Naive thymus-derived CD4-positive, alpha-beta T cell (primary cell): ENCODE measurements at regions of chr1 and their contacts with region 1.

Region 1: DNA sequence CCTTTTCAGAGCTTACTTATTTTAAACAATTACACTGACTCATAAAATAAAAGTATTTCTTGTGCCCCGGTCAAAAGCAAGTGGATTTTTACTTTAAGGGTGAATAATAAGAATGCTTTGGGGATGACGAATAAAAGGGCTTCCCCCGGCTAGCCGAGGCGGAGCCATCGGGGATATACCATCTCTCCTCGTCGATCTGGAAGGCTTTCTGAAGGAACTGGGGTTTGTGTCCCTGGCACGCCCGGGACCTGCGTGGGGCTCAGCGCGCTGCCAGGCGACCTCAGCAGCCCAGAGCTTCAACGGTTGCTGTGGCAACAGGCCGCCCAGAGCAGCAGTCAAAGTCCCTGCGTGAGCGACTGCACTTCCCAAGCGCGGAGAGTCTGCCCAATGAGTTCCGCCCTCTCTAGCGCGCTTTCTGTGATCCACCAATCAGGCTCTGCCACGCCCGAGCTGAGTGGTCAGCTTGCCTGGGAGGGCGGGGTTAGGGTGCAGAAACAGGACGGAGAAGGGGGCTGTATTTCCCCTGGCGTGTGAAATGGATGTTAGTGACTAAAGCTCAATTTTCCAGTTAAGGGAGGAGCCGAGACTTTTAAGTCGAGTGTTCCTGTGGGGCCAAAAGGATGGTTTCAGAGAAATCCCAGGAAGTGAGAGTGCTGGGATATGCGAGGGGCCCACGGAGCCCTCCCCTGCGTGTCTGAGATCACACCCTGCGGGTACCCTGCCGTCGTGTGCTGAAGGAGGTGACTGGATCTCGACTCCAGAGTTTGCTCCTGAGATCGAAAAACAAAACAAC is 33.0 kb upstream of the MGST3 start:
- DNase-seq: peak; percentile 71 to 93 (median 79)
- ATAC-seq: peak; percentile 98
- H3K4me3 ChIP-seq: peak overlapping the region; percentile 70
- H3K4me3 Mint-ChIP-seq: peak overlapping the region; percentile 86 to 95 (median 92)
- H3K27ac ChIP-seq: peak overlapping the region; percentile 31
- H3K27ac Mint-ChIP-seq: peak overlapping the region in 8 of 9 donors; percentile 28 to 94 (median 85)
- H3K4me1 ChIP-seq: peaks cover 11 to 12% of the 10 kb centered on the region in 2 donors
- H3K4me1 Mint-ChIP-seq: peaks cover 21 to 28% (median 26%) of the 10 kb centered on the region in 7 donors
- H3K27me3 ChIP-seq: peaks cover 6 to 16% of the 10 kb centered on the region in 2 donors
- H3K27me3 Mint-ChIP-seq: peaks cover 24 to 55% (median 47%) of the 10 kb centered on the region in 5 donors

Region 2: DNA sequence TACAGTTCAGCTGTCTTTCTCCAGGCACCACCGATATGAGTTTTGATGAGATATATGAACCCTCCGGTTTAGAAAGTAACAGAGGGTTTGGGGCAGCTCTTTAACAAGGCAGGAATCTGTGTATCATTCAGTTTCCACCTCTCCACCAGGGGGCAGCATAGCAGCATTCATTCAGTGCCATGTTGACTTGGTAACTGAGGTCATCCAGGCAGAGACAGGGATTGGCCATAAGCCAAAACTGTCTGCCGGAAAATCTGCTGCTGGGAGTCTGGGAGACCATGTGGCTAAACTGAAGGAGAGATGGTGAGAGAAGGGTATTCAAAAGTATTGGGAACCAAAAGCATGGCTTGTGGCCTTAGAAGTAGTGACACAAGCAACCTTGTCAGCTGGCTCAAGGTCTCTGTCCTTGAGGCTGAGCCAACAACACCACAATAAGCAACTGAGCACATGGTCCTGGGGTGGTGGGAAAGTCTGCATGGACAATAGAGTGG is 340.1 kb before region 1 on chr1:
- CTCF ChIA-PET with region 1: no interaction called
- POLR2A ChIA-PET with region 1: no interaction called
- intact Hi-C with region 1: loop called in 1 of 2 experiments (anchors 1 kb)
- DNase-seq: peak in 2 of 9 donors; percentile 0 to 33
- ATAC-seq: no peak
- H3K4me3 ChIP-seq: no peak overlapping the region
- H3K4me3 Mint-ChIP-seq: no peak overlapping the region
- H3K27ac ChIP-seq: no peak overlapping the region
- H3K27ac Mint-ChIP-seq: no peak overlapping the region
- H3K4me1 ChIP-seq: no peaks in the 10 kb centered on the region
- H3K4me1 Mint-ChIP-seq: no peaks in the 10 kb centered on the region
- H3K27me3 ChIP-seq: no peaks in the 10 kb centered on the region
- H3K27me3 Mint-ChIP-seq: peaks cover 2 to 43% (median 28%) of the 10 kb centered on the region in 5 donors

Region 3: GRCh38 chr1:165403835-165404482 is 194.1 kb before region 1 on chr1:
- CTCF ChIA-PET with region 1: interaction called, 5 read pairs
- POLR2A ChIA-PET with region 1: no interaction called
- intact Hi-C with region 1: loop called (anchors 1 kb)
- DNase-seq: peak in 4 of 9 donors; percentile 25 to 36 (median 30)
- ATAC-seq: peak; percentile 62
- H3K4me3 ChIP-seq: no peak overlapping the region
- H3K4me3 Mint-ChIP-seq: peak overlapping the region in 1 of 10 donors; percentile 14
- H3K27ac ChIP-seq: no peak overlapping the region
- H3K27ac Mint-ChIP-seq: no peak overlapping the region
- H3K4me1 ChIP-seq: no peaks in the 10 kb centered on the region
- H3K4me1 Mint-ChIP-seq: peaks cover 0 to 4% (median 0%) of the 10 kb centered on the region in 7 donors
- H3K27me3 ChIP-seq: no peaks in the 10 kb centered on the region
- H3K27me3 Mint-ChIP-seq: peaks cover 30 to 41% (median 34%) of the 10 kb centered on the region in 5 donors

Region 4: DNA sequence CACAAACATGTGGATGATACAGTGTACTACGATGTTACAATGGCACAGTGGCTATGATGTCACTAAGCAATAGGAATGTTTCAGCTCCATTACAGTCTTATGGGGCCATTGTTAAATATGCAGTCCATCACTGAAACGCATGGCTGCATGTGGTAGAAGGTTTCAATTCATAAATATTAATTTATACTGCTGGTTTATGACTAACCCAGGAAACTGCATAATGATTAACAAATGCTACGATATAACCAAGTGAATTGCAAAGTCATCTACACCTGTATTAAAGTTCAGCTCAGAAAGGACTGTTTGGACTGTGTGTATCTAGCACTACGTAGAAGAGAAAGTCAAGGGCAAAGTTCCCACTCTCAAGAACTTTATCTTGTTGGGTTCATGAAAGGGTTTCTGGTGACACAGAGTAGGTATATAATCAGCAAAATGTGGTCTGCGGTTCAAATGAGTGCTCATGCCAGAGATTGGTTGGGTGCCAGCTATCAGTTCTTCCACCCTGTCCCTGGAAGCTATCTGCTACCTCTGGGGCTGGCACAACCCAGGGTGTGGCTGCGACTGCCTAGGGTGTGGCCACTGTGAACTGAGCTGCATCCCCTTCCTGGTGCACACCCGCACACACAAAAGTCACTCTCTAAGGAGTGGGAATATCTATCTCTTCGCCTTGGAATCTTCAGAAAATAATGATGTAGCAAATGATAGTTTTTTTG is 47.7 kb after region 1 on chr1:
- CTCF ChIA-PET with region 1: no interaction called
- POLR2A ChIA-PET with region 1: no interaction called
- intact Hi-C with region 1: no loop called
- DNase-seq: no peak
- ATAC-seq: peak; percentile 61
- H3K4me3 ChIP-seq: no peak overlapping the region
- H3K4me3 Mint-ChIP-seq: peak overlapping the region in 1 of 10 donors; percentile 34
- H3K27ac ChIP-seq: no peak overlapping the region
- H3K27ac Mint-ChIP-seq: peak overlapping the region in 2 of 9 donors; percentile 15 to 36
- H3K4me1 ChIP-seq: peaks cover 7 to 8% of the 10 kb centered on the region in 2 donors
- H3K4me1 Mint-ChIP-seq: peaks cover 11 to 42% (median 25%) of the 10 kb centered on the region in 7 donors
- H3K27me3 ChIP-seq: no peaks in the 10 kb centered on the region
- H3K27me3 Mint-ChIP-seq: no peaks in the 10 kb centered on the region

Region 5: GRCh38 chr1:165697881-165698760 is 100.0 kb after region 1 on chr1 and contains the start of gene ALDH9A1:
- CTCF ChIA-PET with region 1: no interaction called
- POLR2A ChIA-PET with region 1: no interaction called
- intact Hi-C with region 1: loop called in 1 of 2 experiments (anchors 1 kb)
- DNase-seq: peak; percentile 73 to 89 (median 89)
- ATAC-seq: peak; percentile 93
- H3K4me3 ChIP-seq: peak within 1 kb of the TSS; percentile 96
- H3K4me3 Mint-ChIP-seq: peak within 1 kb of the TSS; percentile 95 to 100 (median 99)
- H3K27ac ChIP-seq: peak within 1 kb of the TSS; percentile 91
- H3K27ac Mint-ChIP-seq: peak within 1 kb of the TSS; percentile 95 to 99 (median 98)
- H3K4me1 ChIP-seq: peaks cover 14 to 18% of the 10 kb centered on the region in 2 donors
- H3K4me1 Mint-ChIP-seq: peaks cover 15 to 42% (median 35%) of the 10 kb centered on the region in 7 donors
- H3K27me3 ChIP-seq: no peaks in the 10 kb centered on the region
- H3K27me3 Mint-ChIP-seq: peaks cover 0 to 2% (median 0%) of the 10 kb centered on the region in 5 donors
- total RNA-seq, gene ALDH9A1: 25.0 to 46.0 (median 40.5) TPM

Region 6: DNA sequence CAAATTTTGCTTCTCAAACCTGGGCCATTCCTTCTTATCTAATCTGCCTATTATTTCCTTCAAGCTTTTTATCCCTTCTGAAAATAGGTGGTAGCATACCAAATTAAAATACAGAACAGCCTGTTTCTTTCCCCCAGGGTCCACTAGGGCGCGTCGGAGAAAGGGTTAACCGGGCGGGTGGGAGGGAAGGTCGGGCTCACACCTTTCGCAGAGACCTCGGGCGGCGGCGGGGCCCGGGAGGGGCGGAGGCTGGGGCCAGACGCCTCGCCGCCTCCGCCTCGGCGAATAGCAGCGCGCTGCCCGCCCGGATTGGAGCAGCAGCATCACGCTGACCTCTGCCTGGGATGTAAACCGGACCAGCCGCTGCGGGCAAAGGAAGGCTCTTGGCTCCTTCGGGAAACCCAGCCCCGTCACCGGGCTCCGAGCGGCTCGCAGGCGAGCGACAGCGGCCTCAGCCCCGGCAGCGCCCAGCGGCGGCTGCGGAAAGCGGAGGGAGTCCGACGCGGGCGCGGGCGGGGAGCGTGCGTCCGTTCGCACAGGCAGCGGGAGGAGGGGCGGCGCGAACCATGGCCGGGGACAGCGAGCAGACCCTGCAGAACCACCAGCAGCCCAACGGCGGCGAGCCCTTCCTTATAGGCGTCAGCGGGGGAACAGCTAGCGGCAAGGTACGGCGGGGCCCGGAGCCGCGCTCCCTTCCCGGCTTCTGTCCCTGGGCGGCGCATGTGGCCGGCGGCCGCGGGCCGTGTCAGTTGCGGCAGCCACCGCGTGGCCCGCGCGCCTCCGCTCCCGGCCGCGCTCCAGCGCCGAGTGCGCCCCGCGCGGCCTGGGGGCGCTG is 229.4 kb after region 1 on chr1 and contains the start of gene UCK2:
- CTCF ChIA-PET with region 1: no interaction called
- POLR2A ChIA-PET with region 1: no interaction called
- intact Hi-C with region 1: loop called (anchors 2 to 5 kb)
- DNase-seq: peak in 7 of 9 donors; percentile 14 to 77 (median 27)
- ATAC-seq: peak; percentile 81
- H3K4me3 ChIP-seq: peak within 1 kb of the TSS; percentile 77
- H3K4me3 Mint-ChIP-seq: peak within 1 kb of the TSS; percentile 85 to 95 (median 92)
- H3K27ac ChIP-seq: peak within 1 kb of the TSS; percentile 42
- H3K27ac Mint-ChIP-seq: peak within 1 kb of the TSS in 7 of 9 donors; percentile 2 to 85 (median 60)
- H3K4me1 ChIP-seq: peaks cover 9 to 12% of the 10 kb centered on the region in 2 donors
- H3K4me1 Mint-ChIP-seq: peaks cover 0 to 27% (median 19%) of the 10 kb centered on the region in 7 donors
- H3K27me3 ChIP-seq: no peaks in the 10 kb centered on the region
- H3K27me3 Mint-ChIP-seq: peaks cover under 1 to 23% (median 9%) of the 10 kb centered on the region in 5 donors
- total RNA-seq, gene UCK2: 0.89 to 32.7 (median 1.2) TPM

Region 7: DNA sequence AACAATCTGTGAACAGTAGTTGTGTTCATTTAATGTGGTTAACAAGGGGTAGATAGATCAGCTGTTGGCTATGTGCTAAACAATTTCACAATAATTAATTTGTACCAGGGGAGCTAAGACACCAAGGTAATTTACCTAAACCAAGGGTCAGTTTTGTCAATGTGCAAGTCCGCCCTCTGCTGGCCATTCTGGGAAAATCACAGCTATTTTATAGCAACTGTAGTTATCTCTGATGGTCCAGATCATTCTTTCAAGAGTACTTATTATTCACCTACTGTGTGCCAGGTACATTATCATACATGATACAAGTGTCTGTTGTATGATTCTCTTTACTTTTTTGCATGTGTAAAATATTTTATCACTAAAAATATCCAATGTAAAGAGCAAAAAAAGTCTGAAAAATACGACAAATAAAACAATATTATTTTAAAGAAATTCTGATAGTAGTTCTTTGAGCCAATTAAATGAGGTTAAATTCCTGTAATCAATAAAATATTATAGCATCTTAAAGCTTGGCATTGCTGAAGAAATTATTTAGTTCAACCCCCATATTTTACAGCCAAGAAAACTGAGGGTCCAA is 881.1 kb after region 1 on chr1:
- CTCF ChIA-PET with region 1: no interaction called
- POLR2A ChIA-PET with region 1: no interaction called
- intact Hi-C with region 1: loop called (anchors 5 to 10 kb)
- DNase-seq: peak in 7 of 9 donors; percentile 17 to 41 (median 29)
- ATAC-seq: peak; percentile 62
- H3K4me3 ChIP-seq: no peak overlapping the region
- H3K4me3 Mint-ChIP-seq: no peak overlapping the region
- H3K27ac ChIP-seq: no peak overlapping the region
- H3K27ac Mint-ChIP-seq: no peak overlapping the region
- H3K4me1 ChIP-seq: no peaks in the 10 kb centered on the region
- H3K4me1 Mint-ChIP-seq: peaks cover 0 to 3% (median 0%) of the 10 kb centered on the region in 7 donors
- H3K27me3 ChIP-seq: no peaks in the 10 kb centered on the region
- H3K27me3 Mint-ChIP-seq: peaks cover 0 to 6% (median 0%) of the 10 kb centered on the region in 5 donors